Vagina (tissue), 2 donors: ENCODE measurements at regions of chr19 and their contacts with region 1.

Region 1: GRCh38 chr19:10870955-10871603 is at the start of gene CARM1:
- DNase-seq: peak in 1 of 2 donors; percentile 98
- H3K4me3 ChIP-seq: peak within 1 kb of the TSS; percentile 91 to 99
- H3K27ac ChIP-seq: peak within 1 kb of the TSS; percentile 94
- H3K4me1 ChIP-seq: peaks cover 37% of the 10 kb centered on the region
- H3K27me3 ChIP-seq: no peaks in the 10 kb centered on the region
- CTCF ChIP-seq: peak; percentile 30 to 61 (median 42)
- POLR2A ChIP-seq: no peak
- total RNA-seq, gene CARM1: 28.2 TPM

Region 2: DNA sequence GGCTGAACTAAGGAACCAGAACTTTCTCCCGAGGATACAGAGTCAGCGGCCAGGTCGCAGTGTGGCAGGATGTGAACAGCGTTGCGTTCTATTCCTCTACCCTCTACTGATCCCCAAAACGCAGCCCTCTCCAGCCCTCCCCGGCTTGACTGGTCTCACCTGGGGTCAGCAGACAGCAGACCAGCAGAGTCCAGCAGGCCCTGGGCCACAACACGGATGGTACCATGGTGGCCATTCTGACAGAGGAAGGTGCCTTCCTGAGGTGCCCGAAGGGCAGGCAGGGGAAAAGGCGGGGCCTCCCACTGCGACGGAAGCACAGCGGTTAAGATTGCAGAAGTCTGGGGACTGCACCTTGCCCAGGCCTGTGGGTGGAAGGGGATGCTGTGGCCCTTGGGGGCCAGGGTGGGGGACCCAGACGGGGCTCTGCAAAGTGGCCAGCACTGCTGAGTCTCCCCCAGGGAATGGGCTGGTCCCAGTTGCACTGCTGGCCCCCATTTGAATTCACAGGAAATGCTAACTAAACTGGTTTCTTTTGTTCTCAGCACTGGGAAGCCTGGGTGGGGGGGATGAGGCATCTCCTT is 531.6 kb before region 1 on chr19 and contains the start of gene ICAM3:
- intact Hi-C with region 1: no loop called
- DNase-seq: no peak
- H3K4me3 ChIP-seq: peak within 1 kb of the TSS in 1 of 2 donors; percentile 3
- H3K27ac ChIP-seq: no peak within 1 kb of the TSS
- H3K4me1 ChIP-seq: peaks cover under 1% of the 10 kb centered on the region
- H3K27me3 ChIP-seq: no peaks in the 10 kb centered on the region
- CTCF ChIP-seq: no peak
- POLR2A ChIP-seq: no peak
- total RNA-seq, gene ICAM3: 7.9 TPM

Region 3: GRCh38 chr19:10812902-10813404 is 58.1 kb before region 1 on chr19:
- intact Hi-C with region 1: no loop called
- DNase-seq: no peak
- H3K4me3 ChIP-seq: no peak overlapping the region
- H3K27ac ChIP-seq: peak overlapping the region; percentile 89
- H3K4me1 ChIP-seq: peaks cover 52% of the 10 kb centered on the region
- H3K27me3 ChIP-seq: no peaks in the 10 kb centered on the region
- CTCF ChIP-seq: no peak
- POLR2A ChIP-seq: no peak

Region 4: DNA sequence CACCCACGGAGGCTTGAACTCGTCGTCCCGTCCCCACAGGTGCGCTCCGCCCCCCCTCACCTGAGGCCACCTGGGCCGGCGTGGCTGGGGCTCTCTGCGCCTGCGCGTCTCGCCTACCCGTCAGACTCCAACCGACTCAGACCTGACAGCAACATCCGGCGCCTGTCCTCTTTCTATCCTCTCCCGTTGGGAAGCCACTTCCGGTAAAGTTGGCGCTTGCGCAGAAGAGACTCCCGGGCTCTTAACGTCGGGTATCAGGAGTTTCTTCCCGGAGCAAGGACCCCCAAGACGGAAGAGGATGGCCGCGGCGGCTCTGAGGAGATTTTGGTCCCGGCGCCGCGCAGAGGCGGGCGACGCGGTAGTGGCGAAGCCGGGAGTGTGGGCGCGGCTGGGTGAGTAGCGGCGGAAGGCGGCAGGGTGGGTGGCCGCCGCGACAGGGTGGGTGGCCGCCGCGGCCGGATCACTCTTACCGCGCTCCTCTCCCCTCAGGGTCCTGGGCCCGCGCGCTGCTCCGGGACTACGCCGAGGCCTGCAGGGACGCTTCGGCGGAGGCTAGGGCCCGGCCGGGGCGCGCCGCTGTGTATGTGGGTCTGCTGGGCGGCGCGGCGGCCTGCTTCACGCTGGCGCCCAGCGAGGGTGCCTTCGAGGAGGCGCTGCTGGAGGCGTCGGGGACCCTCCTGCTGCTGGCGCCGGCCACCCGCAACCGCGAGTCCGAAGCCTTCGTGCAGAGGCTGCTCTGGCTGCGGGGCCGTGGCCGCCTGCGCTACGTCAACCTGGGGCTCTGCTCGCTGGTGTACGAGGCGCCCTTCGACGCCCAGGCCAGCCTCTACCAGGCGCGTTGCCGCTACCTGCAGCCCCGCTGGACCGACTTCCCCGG is 57.7 kb after region 1 on chr19 and contains the starts of genes TIMM29 and YIPF2:
- intact Hi-C with region 1: loop called (anchors 10 kb)
- DNase-seq: peak; percentile 99
- H3K4me3 ChIP-seq: peak within 1 kb of the TSS; percentile 71 to 73
- H3K27ac ChIP-seq: peak within 1 kb of the TSS; percentile 93
- H3K4me1 ChIP-seq: peaks cover 24% of the 10 kb centered on the region
- H3K27me3 ChIP-seq: no peaks in the 10 kb centered on the region
- CTCF ChIP-seq: no peak
- POLR2A ChIP-seq: no peak
- total RNA-seq, gene TIMM29: 21.9 TPM
- total RNA-seq, gene YIPF2: 42.7 TPM

Region 5: DNA sequence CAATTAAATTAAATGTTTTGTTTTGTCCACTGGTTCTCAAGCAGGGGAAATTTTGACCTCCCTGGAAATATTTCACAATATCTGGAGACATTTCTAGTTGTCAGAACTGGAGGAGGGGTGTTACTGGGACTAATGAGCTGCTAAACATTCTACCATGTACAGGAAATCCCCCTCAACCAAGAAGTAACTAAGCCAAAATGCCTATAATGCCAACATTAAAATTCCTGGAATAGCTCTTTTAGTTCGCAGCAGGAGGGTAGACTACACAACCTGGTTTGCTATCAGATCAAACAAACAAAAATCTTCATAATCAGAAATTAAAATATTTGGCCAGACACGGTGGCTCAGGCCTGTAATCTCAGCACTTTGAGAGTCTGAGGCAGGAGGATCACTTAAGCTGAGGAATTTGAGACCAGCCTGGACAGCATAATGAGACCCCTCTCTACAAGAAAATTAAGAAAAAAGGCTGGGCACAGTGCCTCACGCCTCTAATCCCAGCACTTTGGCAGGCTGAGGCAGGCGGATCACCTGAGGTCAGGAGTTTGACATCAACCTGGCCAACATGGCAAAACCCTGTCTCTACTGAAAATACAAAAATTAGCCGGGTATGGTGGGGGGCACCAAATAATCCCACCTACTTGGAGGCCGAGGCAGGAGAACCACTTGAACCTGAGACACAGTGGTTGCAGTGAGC is 76.0 kb after region 1 on chr19:
- intact Hi-C with region 1: no loop called
- DNase-seq: no peak
- H3K4me3 ChIP-seq: no peak overlapping the region
- H3K27ac ChIP-seq: peak overlapping the region; percentile 12
- H3K4me1 ChIP-seq: peaks cover 10% of the 10 kb centered on the region
- H3K27me3 ChIP-seq: no peaks in the 10 kb centered on the region
- CTCF ChIP-seq: no peak
- POLR2A ChIP-seq: no peak

Region 6: GRCh38 chr19:11035441-11036377 is 164.6 kb after region 1 on chr19:
- intact Hi-C with region 1: no loop called
- DNase-seq: no peak
- H3K4me3 ChIP-seq: no peak overlapping the region
- H3K27ac ChIP-seq: peak overlapping the region; percentile 68
- H3K4me1 ChIP-seq: peaks cover 5% of the 10 kb centered on the region
- H3K27me3 ChIP-seq: no peaks in the 10 kb centered on the region
- CTCF ChIP-seq: peak; percentile 87 to 94 (median 87)
- POLR2A ChIP-seq: no peak